ENCODE measurements at regions of chr12 and their contacts with region 1.

Region 1: DNA sequence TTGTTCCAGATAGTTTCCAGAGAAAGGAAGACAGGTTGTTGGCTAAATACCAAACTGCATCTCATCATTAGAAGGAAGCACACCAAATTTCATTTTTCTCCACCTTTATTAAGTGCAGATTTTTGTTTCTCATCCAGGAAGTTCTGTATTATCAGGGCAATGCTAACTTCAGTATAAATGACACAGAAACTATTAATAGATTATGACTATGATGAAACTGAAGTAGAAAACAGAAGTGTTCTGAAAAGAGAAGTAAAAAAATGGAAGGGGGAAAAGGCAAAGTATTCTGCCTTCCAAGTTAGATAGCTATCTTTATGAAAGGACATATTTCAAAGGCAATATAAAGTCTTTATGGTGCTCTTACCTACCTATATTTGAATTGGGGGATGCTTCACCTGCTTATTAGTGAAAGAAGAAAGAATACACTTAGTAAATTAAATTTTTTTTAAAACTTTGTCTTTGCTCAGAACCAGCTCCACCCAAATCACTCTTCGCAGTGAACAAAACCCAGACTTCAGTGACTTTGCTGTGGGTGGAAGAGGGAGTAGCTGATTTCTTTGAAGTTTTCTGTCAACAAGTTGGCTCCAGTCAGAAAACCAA is 223.9 kb downstream of the PTPRO start:
- DNase-seq: no peak
- ATAC-seq: peak; percentile 76
- H3K4me3 Mint-ChIP-seq: peak overlapping the region; percentile 87
- H3K27ac Mint-ChIP-seq: peak overlapping the region; percentile 99
- H3K4me1 Mint-ChIP-seq: peaks cover 60% of the 10 kb centered on the region
- H3K27me3 Mint-ChIP-seq: no peaks in the 10 kb centered on the region
- CTCF ChIP-seq: no peak

Region 2: DNA sequence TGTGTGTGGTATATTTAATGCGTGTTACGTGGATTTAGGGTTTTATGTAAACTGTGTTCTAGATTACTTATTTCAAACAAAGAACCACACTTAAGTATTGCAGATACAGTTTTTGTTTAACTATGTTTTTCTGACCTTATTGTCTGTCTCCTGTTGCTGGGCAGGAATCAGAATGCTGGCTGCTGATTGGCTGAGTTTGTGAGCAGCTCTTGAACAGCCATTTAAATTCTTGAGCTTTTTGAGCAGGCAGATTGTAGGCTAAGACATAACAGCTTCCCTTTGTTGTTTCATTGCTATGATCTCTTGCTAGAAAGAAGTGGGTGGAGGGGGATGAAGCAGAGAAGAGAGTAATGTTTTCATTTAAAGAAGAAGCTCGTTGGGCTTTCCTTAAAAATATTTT is 1128.5 kb before region 1 on chr12:
- CTCF ChIA-PET with region 1: no interaction called
- POLR2A ChIA-PET with region 1: no interaction called
- intact Hi-C with region 1: no loop called
- DNase-seq: no peak
- ATAC-seq: peak; percentile 59
- H3K4me3 Mint-ChIP-seq: peak overlapping the region; percentile 58
- H3K27ac Mint-ChIP-seq: peak overlapping the region; percentile 82
- H3K4me1 Mint-ChIP-seq: peaks cover 55% of the 10 kb centered on the region
- H3K27me3 Mint-ChIP-seq: no peaks in the 10 kb centered on the region
- CTCF ChIP-seq: no peak

Region 3: GRCh38 chr12:14618983-14619382 is 927.2 kb before region 1 on chr12:
- CTCF ChIA-PET with region 1: no interaction called
- POLR2A ChIA-PET with region 1: no interaction called
- intact Hi-C with region 1: loop called (anchors 10 kb)
- DNase-seq: no peak
- ATAC-seq: no peak
- H3K4me3 Mint-ChIP-seq: peak overlapping the region; percentile 19
- H3K27ac Mint-ChIP-seq: peak overlapping the region; percentile 9
- H3K4me1 Mint-ChIP-seq: peaks cover 48% of the 10 kb centered on the region
- H3K27me3 Mint-ChIP-seq: no peaks in the 10 kb centered on the region
- CTCF ChIP-seq: no peak

Region 4: GRCh38 chr12:15122344-15122743 is 423.9 kb before region 1 on chr12:
- CTCF ChIA-PET with region 1: no interaction called
- POLR2A ChIA-PET with region 1: no interaction called
- intact Hi-C with region 1: no loop called
- DNase-seq: no peak
- ATAC-seq: no peak
- H3K4me3 Mint-ChIP-seq: no peak overlapping the region
- H3K27ac Mint-ChIP-seq: no peak overlapping the region
- H3K4me1 Mint-ChIP-seq: no peaks in the 10 kb centered on the region
- H3K27me3 Mint-ChIP-seq: peaks cover 3% of the 10 kb centered on the region
- CTCF ChIP-seq: no peak

Region 5: GRCh38 chr12:15472036-15472435 is 74.2 kb before region 1 on chr12:
- CTCF ChIA-PET with region 1: no interaction called
- POLR2A ChIA-PET with region 1: no interaction called
- intact Hi-C with region 1: no loop called
- DNase-seq: no peak
- ATAC-seq: no peak
- H3K4me3 Mint-ChIP-seq: no peak overlapping the region
- H3K27ac Mint-ChIP-seq: no peak overlapping the region
- H3K4me1 Mint-ChIP-seq: no peaks in the 10 kb centered on the region
- H3K27me3 Mint-ChIP-seq: peaks cover 13% of the 10 kb centered on the region
- CTCF ChIP-seq: no peak

Region 6: DNA sequence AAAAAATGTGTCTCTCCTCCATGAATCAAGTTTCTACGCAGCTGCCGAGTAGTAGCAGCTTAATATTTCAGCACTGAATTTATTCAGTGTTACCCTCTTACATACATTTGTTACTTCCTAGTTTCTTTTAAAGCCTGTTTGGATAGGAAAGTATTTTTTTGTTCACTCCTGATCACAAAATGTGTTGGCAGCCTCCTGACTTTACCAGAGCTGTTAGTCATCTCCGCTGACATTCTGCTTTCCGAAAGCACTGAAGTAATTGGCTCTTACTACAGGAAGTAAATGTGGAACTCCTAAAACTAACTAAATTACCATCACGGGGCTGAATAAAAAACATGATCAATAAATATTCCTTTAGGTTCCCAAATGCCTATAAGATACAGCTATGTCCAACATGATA is 17.5 kb after region 1 on chr12:
- CTCF ChIA-PET with region 1: interaction called, 3 read pairs
- POLR2A ChIA-PET with region 1: interaction called, 11 read pairs
- intact Hi-C with region 1: loop called (anchors 1 kb)
- DNase-seq: no peak
- ATAC-seq: peak; percentile 68
- H3K4me3 Mint-ChIP-seq: peak overlapping the region; percentile 81
- H3K27ac Mint-ChIP-seq: peak overlapping the region; percentile 86
- H3K4me1 Mint-ChIP-seq: peaks cover 24% of the 10 kb centered on the region
- H3K27me3 Mint-ChIP-seq: no peaks in the 10 kb centered on the region
- CTCF ChIP-seq: no peak

Region 7: GRCh38 chr12:15575671-15576541 is 29.7 kb after region 1 on chr12:
- CTCF ChIA-PET with region 1: interaction called, 9 read pairs
- POLR2A ChIA-PET with region 1: interaction called, 55 read pairs
- intact Hi-C with region 1: loop called (anchors 1 kb)
- DNase-seq: no peak
- ATAC-seq: no peak
- H3K4me3 Mint-ChIP-seq: no peak overlapping the region
- H3K27ac Mint-ChIP-seq: no peak overlapping the region
- H3K4me1 Mint-ChIP-seq: peaks cover 10% of the 10 kb centered on the region
- H3K27me3 Mint-ChIP-seq: no peaks in the 10 kb centered on the region
- CTCF ChIP-seq: no peak

Region 8: GRCh38 chr12:15741082-15741481 is 194.9 kb after region 1 on chr12:
- CTCF ChIA-PET with region 1: no interaction called
- POLR2A ChIA-PET with region 1: no interaction called
- intact Hi-C with region 1: no loop called
- DNase-seq: no peak
- ATAC-seq: no peak
- H3K4me3 Mint-ChIP-seq: no peak overlapping the region
- H3K27ac Mint-ChIP-seq: no peak overlapping the region
- H3K4me1 Mint-ChIP-seq: no peaks in the 10 kb centered on the region
- H3K27me3 Mint-ChIP-seq: no peaks in the 10 kb centered on the region
- CTCF ChIP-seq: no peak

Measured in activated B cell treated with CpG ODN at 0.5 μM for 24 hours (primary cell).